ENCODE measurements at regions of chr1 and their contacts with region 1.

Region 1: DNA sequence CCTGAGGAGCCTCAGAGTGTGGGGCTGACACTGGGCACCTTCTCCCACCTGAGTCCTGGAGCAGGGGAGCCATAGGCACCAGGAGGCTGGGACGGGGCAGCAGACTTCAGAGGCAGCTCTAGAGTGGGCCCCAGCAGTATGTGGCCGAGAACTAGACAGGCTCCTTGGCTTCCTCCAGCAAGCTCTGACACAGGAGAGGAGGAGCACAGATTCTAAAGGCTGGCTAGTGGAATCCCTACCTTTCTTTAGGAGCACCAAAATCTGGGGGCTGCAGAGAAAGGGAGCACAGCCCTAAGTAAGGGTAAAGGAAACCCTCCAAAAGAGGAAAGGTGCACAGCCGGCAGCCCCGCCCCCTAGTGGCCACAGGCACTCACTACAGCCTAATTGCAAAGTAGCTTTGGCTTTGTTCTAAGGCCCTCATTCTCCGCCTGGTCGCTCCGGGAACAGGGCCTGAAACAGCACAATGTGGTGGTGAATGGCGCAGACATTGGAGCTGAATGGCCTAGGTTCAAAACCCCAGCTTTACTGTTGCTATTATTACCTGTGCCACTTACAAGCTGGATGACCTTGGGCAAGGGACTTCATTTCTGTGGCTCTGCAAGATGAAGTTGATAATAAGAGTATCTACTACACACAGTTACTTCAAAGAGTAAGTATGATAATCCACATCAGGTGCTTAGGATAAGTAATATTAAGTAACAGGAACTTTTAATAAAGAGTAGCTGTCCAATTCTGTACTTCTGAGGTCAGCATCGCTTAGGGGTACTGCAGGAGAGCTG is 8.8 kb upstream of the GUCA2A start:
- DNase-seq: peak; percentile 71
- H3K4me3 ChIP-seq: no peak overlapping the region
- H3K27ac ChIP-seq: no peak overlapping the region
- H3K4me1 ChIP-seq: peaks cover 4% of the 10 kb centered on the region
- H3K27me3 ChIP-seq: no peaks in the 10 kb centered on the region
- CTCF ChIP-seq: peak; percentile 99

Region 2: GRCh38 chr1:42133809-42134526 is 39.4 kb before region 1 on chr1:
- CTCF ChIA-PET with region 1: no interaction called
- POLR2A ChIA-PET with region 1: no interaction called
- intact Hi-C with region 1: loop called (anchors 1 kb)
- DNase-seq: no peak
- H3K4me3 ChIP-seq: no peak overlapping the region
- H3K27ac ChIP-seq: no peak overlapping the region
- H3K4me1 ChIP-seq: no peaks in the 10 kb centered on the region
- H3K27me3 ChIP-seq: no peaks in the 10 kb centered on the region
- CTCF ChIP-seq: no peak

Measured in A673 (cell line).